BJ (cell line): ENCODE measurements at regions of chr16 and their contacts with region 1.

Region 1: DNA sequence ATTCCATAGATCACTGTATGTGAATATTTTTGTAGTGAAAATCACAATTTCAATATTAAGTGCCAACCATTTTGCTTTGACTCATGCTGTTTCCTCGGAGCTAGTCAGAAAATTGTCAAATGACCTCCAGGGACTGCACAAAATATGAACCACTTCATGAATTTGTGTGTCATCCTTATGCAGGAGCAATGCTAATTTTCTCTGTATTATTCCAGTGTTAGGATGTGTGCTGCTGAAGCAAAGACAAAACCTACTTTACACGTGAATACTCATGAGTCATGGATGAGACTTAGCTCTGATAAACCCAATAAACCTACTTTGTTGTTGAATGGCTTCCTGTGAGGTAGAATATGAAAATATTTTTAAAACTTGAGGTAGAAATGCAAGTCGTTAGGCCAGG is 65.2 kb downstream of the SHCBP1 start:
- DNase-seq: peak; percentile 3
- H3K4me3 ChIP-seq: no peak overlapping the region
- H3K27me3 ChIP-seq: no peaks in the 10 kb centered on the region
- CTCF ChIP-seq: no peak

Region 2: DNA sequence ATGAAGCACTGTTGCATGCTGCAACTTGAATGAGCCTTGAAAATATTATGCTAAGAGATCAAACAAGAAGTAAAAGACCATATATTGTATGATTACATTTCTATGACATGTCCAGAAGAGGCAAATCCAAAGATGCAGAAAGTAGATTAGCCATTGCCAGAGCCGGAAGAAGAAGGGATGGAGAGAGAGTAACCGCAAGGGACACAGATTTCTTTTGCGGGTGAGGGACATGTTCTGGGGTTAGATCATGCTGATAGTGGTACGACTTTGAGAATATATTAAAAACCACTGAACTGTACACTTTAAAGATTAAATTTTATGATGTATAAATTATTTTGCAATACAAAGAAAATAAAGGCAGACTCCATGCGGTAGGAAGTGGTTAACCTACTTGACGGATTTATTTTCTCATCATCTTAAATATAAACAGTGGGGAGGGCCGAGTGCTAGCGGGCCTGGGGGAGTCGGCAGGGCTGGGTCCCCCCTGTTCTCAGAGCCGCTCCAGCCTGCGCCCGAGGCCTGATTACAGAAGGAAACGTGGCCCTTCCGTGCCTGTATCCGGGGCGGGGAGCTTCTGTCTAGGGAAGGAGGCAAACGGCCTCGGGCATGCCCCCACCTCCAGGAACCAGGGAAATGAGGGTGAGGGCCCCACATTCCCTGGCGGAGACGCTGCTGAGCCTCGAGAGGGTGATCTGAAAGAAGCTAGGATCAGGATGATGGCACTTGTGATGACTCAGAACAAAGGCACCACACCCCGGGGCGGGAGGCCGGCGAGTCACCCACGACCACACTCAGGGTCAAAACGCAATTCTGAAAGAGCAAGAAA is 17.3 kb after region 1 on chr16:
- CTCF ChIA-PET with region 1: interaction called, 17 read pairs
- POLR2A ChIA-PET with region 1: no interaction called
- DNase-seq: peak; percentile 9
- H3K4me3 ChIP-seq: no peak overlapping the region
- H3K27me3 ChIP-seq: no peaks in the 10 kb centered on the region
- CTCF ChIP-seq: no peak

Region 3: GRCh38 chr16:46607529-46607928 is 51.6 kb after region 1 on chr16:
- CTCF ChIA-PET with region 1: interaction called, 156 read pairs
- POLR2A ChIA-PET with region 1: interaction called, 3 read pairs
- DNase-seq: no peak
- H3K4me3 ChIP-seq: no peak overlapping the region
- H3K27me3 ChIP-seq: no peaks in the 10 kb centered on the region
- CTCF ChIP-seq: peak; percentile 39; the same call in 1 of the 2 replicates

Region 4: DNA sequence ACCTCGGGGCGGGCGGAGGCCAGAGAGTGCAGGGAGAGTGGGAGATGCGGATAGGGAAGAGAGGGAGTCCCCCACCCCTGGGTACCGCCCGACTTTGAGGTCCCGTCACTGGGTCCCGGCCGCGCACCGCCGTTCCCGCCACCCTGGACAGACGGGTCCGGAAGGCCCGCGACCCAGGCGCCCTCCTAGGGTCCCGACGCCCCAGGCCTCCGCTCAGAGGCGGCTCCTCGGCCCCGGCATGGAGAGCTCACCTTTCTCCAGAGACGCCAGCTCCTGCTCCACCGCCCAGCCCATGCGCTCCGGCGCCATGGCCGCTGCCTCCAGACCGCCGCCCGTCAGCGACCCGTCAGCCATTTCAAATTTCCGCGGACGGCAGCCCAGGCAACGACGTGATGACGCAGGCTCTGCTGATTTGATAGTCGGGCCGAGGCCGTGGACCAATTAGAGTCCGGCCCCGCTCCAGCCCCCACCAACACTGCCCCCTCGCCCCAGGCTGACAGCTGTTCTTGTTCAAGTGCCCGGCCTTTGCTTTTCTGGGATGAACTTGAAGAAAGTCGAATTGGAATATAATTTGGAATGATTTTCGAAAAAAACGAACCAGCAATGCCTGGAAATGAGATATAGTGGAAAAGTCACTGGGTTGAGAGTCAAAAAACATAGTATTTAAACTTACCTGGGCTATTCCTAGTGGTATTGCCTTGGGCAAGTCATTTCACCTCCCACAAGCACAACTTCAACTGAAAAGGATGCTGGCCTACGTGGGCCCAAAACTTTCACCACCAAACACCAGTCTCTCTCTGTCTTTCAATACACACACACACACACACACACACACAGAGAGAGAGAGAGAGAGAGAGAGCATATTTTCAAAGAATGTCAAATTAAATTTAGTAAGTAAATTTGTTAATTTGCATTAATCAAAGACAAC is 65.3 kb after region 1 on chr16 and contains the start of gene SHCBP1:
- CTCF ChIA-PET with region 1: interaction called, 12 read pairs
- POLR2A ChIA-PET with region 1: no interaction called
- DNase-seq: peak; percentile 45
- H3K4me3 ChIP-seq: peak within 1 kb of the TSS; percentile 95
- H3K27me3 ChIP-seq: no peaks in the 10 kb centered on the region
- CTCF ChIP-seq: no peak
- polyA plus RNA-seq, gene SHCBP1: 17.0 and 18.8 TPM in 2 replicates

Region 5: DNA sequence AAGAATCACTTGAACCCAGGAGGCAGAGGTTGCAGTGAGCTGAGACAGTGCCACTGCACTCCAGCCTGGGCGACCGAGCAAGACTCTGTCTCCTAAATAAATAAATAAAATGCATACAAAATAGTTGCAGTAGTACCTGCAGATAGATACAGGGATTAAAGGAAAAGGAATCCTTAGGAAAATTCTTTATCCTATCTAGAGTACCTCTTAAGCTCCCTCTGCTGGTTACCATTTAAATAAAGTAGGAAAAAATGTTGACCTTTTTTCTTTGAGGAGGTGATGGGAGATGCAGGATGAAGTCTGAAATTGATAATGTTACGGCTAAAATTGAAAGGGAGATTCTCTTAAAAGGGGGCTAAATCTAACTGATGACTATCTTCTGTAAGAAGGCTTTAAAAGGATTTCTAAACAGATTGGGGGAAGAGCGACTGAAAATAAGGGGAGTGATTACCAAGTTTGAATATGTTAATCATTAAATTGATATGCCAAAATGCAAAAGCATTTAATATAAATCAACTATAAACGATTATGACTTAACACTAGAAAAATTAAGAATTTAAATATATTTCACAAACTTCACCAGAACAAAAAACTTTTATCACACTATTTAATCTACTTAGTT is 245.6 kb after region 1 on chr16:
- CTCF ChIA-PET with region 1: no interaction called
- POLR2A ChIA-PET with region 1: no interaction called
- DNase-seq: no peak
- H3K4me3 ChIP-seq: no peak overlapping the region
- H3K27me3 ChIP-seq: no peaks in the 10 kb centered on the region
- CTCF ChIP-seq: peak; percentile 37